Sigmoid colon (tissue), 7 donors: ENCODE measurements at regions of chr3 and their contacts with region 1.

Region 1: DNA sequence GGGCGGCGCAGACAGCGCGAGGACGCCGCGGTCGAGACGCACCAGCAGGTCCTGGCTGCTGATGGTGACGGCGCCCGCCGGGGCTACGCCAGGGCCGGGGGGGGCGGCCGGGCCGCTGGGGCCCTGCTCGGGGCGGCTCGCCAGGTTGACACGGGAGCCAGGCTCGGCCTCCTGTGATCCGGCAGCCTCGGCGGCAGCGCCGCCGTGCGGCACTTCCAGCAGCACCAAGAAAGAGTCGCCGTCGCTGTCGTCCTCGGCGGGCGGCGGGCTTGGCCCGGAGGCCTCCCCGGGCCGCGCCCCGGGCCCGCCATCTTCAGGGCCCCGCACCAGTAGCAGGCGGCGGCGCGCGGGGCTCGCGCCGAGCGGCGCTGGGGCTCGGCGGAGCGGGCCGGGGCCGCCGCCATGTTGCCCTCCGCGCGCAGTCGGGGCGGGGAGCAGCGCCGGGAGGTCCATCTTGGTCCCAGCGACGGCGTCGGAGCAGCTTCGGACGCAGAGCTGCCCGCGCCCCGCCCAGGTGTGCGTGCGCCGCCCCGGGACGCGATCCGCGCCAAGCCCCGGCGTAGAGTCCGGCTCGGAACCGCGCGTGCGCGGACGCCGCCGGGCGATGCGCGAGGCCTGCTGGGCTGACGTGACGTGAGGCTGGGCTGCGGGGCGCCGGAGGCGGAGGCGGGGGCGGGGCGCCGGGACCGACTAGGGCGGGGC is at the start of gene ZXDC:
- DNase-seq: peak; percentile 97
- H3K4me3 ChIP-seq: peak within 1 kb of the TSS; percentile 46 to 84 (median 73)
- H3K27ac ChIP-seq: peak within 1 kb of the TSS; percentile 88 to 96 (median 94)
- H3K4me1 ChIP-seq: peaks cover 0 to 54% (median 47%) of the 10 kb centered on the region in 4 donors
- H3K27me3 ChIP-seq: no peaks in the 10 kb centered on the region
- CTCF ChIP-seq: no peak
- EP300 ChIP-seq: no peak
- POLR2A ChIP-seq: no peak
- total RNA-seq, gene ZXDC: 26.4 to 33.8 (median 28.9) TPM

Region 2: DNA sequence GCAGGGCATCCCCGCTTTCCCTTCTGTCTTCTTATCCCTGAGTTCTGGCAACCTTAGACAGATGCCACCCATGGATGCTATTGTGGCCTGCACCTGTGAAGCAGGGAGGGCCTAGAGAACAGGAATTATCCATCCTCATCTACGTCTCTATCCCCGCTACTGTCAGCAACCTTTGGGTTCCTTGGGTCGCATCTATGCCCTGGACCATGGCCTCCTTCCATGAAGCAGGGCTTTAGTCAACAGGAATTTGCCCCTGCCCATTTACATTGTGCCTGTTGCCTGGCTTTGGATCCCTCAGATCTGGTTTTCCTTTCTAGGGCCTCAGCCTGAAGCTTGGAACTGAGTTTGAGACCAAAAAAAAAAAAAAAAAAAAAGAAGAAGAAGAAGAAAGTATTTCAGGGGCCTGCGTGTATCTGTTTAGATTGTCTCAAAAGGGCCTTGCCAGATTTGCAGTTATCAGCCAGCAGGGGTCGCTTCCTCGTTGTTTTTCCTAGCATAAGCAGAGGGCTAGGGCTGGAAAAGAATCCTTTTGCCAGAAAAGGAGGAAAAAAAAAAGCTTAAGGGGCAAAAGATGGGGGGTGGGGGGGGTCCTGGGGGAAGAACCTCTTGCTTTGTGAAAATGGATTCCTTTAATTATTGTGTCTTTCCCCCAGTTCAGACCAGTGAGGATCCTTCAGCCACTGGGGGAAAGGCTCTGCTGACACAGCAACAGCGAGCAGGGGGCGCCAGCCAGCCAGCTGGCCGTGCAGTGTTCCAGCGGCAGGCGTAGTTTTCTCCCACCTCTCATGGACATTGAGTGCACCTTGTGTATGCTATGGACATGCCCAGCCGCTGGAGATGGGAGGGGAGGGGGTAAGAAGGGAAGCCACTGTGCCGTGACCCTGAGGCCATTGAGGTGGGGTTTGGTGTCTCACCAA is 229.5 kb before region 1 on chr3:
- intact Hi-C with region 1: loop called (anchors 5 kb)
- DNase-seq: peak; percentile 82
- H3K4me3 ChIP-seq: no peak overlapping the region
- H3K27ac ChIP-seq: no peak overlapping the region
- H3K4me1 ChIP-seq: no peaks in the 10 kb centered on the region
- H3K27me3 ChIP-seq: no peaks in the 10 kb centered on the region
- CTCF ChIP-seq: peak in 1 of 4 experiments; percentile 57
- EP300 ChIP-seq: no peak
- POLR2A ChIP-seq: no peak

Region 3: DNA sequence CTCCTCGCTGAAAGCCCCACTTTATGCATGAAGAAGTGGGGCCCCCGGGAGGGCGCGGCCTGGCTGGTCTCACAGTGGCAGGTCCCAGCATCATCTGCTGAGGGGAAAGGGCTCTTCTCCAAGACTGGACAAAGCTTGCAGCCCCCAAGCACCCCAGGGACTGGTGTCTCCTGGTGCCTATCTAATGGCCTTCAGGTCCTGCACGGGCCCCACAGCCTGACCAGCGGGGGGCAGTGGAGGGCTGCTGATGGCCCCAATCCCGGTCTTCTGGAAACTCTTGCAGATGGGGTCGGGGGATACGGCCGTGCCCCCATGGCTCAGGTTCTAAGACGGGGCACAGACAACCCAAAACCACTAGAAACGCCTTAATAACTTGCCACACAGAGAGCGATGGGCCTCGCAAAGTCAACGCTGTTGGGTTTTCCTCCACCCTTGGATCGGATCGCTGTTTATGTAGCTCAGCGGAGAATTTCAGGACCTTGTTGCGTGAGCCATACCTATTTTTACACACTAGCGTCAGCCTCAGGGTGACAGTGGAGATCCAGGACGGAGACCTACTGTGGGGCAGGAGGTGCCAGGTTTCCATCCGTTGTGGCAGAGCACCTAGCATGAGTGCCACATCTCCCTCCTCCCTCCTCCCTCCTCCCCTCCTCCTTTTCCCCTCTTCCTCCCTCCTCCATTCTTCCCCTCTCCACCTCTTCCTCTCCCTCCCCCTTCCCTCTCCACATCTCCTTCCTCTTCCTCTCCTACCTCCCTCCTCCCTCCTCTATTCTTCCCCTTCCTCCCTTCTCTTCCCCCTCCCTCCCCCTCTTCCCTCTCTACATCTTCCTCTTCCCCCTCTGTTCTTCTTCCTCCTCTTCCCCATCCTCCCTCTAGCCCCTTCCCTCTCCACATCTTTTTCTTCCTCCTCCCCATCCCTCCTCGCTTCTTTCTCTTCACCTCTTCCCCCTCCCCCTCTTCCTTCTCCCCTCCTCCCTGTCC is 215.9 kb before region 1 on chr3:
- intact Hi-C with region 1: loop called (anchors 5 kb)
- DNase-seq: peak; percentile 85
- H3K4me3 ChIP-seq: peak overlapping the region in 3 of 4 donors; percentile 14 to 38 (median 28)
- H3K27ac ChIP-seq: peak overlapping the region in 3 of 4 donors; percentile 16 to 42 (median 28)
- H3K4me1 ChIP-seq: peaks cover 0 to 7% (median 2%) of the 10 kb centered on the region in 4 donors
- H3K27me3 ChIP-seq: no peaks in the 10 kb centered on the region
- CTCF ChIP-seq: peak; percentile 74 to 86 (median 78)
- EP300 ChIP-seq: no peak
- POLR2A ChIP-seq: no peak